ENCODE measurements at regions of chr6 and their contacts with region 1.

Region 1: DNA sequence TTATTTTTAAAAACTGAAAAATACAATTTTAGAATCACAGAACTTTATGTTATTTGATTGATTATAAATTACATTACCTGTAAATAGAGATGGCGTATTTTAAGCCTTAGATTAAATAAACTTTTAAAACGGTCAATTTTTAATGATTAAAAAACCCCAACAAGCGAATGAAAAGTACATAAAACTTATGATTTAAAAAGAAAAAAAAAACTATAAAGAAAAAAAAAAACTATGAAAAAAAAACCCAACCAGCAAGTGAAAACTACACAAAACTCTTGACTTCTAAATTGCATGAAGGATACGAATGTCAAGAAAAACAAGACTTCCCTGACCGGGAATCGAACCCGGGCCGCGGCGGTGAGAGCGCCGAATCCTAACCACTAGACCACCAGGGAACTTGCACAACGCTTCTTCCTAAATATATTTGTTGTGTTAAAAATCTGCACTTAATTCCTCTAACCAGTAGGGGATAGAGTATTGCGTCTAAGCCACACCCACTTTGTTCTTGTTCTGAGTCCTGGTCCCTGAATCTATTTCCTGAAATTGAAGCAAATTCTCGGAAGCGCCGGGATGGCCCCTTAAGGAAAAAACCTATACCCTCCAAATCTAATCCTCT is 10.7 kb upstream of the NCOA7 start:
- DNase-seq: peak; percentile 94
- H3K27ac ChIP-seq: peak overlapping the region; percentile 96
- CTCF ChIP-seq: no peak

Region 2: DNA sequence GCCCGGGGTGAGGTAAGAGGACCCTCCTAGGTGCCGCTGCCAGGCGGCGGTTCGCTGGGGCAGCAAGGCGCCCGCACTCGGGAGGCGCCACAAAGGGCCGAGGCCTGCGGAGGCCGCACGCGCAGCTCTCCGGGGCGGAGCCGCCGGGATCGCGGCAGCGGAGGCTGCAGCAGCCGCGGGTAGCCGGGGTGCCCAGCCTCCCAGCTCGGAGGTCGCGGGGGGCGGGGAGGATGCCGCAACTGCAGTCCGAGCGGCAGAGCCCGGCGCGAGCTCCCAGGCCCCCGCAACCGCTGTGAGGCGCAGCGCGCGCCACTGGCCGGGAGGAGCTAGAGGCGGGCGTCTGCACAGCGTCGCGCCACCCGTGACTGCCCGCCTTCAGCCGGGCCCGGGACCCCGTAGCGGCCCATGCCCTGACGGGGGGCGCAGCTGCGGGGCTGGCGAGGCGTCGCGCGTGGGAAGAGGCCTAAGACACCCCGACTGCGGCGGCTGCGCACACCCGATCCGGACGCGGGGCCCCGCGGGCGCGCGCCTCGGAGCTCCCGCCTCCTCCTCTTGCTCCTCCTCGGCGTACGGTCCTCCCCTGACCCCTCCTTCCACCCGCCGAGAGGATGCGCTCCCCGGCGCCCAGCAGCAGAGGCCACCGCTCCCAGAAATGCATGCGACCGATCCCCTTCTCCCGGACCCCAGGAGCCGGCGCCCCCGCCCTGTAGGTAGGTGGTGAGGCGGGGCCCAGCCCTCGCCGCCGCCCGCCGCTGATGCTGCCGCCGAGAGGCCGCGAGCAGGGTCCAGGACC is 10.5 kb after region 1 on chr6 and contains the start of gene NCOA7:
- CTCF ChIA-PET with region 1: interaction called, 13 read pairs
- POLR2A ChIA-PET with region 1: interaction called, 10 read pairs
- DNase-seq: peak; percentile 62
- H3K27ac ChIP-seq: peak within 1 kb of the TSS; percentile 90
- CTCF ChIP-seq: no peak

Region 3: GRCh38 chr6:125821825-125822281 is 41.8 kb after region 1 on chr6:
- CTCF ChIA-PET with region 1: no interaction called
- POLR2A ChIA-PET with region 1: no interaction called
- DNase-seq: no peak
- H3K27ac ChIP-seq: no peak overlapping the region
- CTCF ChIP-seq: no peak

Region 4: DNA sequence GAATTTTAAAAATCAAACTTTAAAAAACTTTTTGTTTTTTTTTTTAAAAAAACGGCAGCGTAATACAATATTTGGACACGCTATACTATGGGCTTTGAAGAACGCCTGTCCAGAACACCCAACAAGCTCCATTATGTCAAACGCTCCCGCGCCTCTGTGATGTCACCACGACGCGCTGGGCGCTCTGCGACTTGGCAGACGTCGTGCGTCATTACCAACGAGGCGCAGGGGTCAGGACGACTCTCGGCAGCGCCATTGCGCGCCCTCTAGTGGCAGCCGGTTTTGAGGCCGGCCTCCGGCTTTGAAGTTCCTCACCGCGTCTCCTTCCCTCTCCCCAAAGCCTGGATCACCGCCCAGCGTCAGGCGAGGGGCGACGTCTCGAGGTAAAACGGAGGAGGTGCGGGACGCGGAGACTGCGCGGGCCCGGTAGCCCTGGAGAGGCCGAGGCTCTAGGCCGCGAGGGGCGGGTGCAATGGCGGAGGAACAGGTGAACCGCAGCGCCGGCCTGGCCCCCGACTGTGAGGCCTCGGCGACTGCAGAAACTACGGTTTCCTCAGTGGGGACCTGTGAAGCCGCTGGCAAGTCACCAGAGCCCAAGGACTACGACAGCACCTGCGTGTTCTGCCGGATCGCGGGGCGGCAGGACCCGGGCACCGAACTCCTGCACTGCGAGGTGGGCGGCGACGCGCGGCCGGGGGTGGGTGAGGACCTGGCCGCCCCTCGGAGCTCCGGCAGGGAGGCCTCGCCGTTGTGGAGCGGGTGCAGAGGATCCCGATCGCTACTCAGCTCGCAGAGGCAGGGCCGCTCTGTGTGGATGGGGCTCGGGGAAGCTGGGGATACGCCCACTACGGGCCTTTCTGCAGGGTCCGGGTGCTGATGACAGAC is 176.7 kb after region 1 on chr6 and contains the start of gene HINT3:
- CTCF ChIA-PET with region 1: interaction called, 12 read pairs
- POLR2A ChIA-PET with region 1: no interaction called
- DNase-seq: peak; percentile 88
- H3K27ac ChIP-seq: peak within 1 kb of the TSS; percentile 88
- CTCF ChIP-seq: peak; percentile 96

Region 5: DNA sequence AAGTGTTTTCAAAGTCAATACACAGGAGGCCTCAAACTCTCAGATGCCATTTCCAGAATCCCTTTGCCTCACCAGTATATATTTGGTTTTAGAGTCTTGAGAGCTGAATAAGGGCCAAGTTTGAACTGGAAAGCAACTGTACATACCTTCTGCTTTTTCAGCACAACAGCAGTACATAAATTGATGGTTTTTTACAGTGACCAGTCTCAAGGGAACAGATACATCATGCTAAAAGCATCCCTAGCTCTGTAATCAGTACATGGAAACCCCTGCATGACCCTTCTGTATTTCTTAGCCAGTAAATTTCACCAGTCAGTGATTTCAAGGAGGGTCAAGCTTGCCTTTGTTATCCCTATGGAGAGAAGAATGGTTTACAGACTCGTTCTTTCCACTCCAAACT is 1604.0 kb after region 1 on chr6:
- CTCF ChIA-PET with region 1: no interaction called
- POLR2A ChIA-PET with region 1: no interaction called
- DNase-seq: no peak
- H3K27ac ChIP-seq: no peak overlapping the region
- CTCF ChIP-seq: no peak